Calu3 (cell line): ENCODE measurements at regions of chr2 and their contacts with region 1.

Region 1: DNA sequence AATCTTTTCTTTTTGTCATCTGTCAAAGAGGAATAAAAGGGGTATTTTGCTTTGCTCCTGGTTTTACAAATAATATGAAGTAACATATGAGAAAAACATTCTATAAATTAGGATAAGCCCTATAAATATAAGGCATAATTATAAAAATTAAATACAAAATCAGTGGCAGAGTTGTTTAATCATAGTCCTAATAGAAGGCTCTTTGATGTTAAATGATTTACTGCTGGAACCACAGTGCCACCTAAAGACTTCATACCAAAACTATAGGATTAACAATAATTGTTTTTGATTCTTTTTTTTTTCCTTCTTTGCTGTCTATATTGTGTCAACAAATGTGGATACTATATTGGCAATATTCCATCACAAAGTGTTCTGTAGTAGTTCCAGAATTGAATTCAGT is 837.7 kb upstream of the SLC39A10 start:
- DNase-seq: peak; percentile 4
- H3K4me3 Mint-ChIP-seq: no peak overlapping the region
- H3K27ac Mint-ChIP-seq: no peak overlapping the region
- H3K4me1 Mint-ChIP-seq: no peaks in the 10 kb centered on the region
- H3K27me3 Mint-ChIP-seq: no peaks in the 10 kb centered on the region
- CTCF ChIP-seq: no peak

Region 2: DNA sequence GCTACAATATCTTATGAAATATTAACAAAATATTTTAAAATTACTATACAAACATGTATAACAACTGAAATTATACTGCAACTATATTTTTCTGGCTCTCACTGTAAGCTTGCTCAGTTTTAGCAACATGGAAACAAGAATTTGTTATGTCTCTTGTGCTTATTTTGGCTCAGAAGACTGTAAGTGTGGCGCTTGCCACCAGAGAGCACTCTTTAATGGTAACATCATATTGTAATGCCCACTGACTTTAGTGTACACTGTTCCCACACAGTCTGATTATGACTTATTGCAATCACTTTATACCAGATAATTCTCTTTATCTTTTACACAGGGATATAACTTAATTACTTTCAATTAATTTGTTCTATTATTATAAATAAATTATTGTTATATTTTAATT is 1124.0 kb before region 1 on chr2:
- CTCF ChIA-PET with region 1: no interaction called
- intact Hi-C with region 1: loop called (anchors 5 kb)
- DNase-seq: peak; percentile 19
- H3K4me3 Mint-ChIP-seq: no peak overlapping the region
- H3K27ac Mint-ChIP-seq: no peak overlapping the region
- H3K4me1 Mint-ChIP-seq: no peaks in the 10 kb centered on the region
- H3K27me3 Mint-ChIP-seq: no peaks in the 10 kb centered on the region
- CTCF ChIP-seq: peak; percentile 29

Region 3: DNA sequence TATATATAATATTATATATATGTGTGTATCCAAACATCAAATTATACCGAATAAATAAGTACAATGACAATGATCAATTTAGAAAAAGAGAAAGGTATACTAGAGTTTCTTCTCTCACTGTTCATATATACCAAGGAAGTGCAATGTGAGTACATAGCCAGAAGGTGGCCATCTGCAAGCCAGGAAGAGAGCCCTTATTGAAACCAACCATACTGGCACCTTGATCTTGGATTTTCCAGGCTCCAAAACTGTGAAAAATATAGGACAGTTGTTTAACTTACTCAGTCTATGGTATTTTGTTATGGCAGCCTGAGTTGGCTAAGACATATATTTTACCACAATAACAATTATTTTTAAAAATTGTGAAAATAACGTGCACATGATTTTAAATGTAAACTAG is 652.5 kb before region 1 on chr2:
- CTCF ChIA-PET with region 1: no interaction called
- intact Hi-C with region 1: loop called (anchors 2 kb)
- DNase-seq: peak; percentile 23
- H3K4me3 Mint-ChIP-seq: no peak overlapping the region
- H3K27ac Mint-ChIP-seq: no peak overlapping the region
- H3K4me1 Mint-ChIP-seq: no peaks in the 10 kb centered on the region
- H3K27me3 Mint-ChIP-seq: no peaks in the 10 kb centered on the region
- CTCF ChIP-seq: peak; percentile 58

Region 4: DNA sequence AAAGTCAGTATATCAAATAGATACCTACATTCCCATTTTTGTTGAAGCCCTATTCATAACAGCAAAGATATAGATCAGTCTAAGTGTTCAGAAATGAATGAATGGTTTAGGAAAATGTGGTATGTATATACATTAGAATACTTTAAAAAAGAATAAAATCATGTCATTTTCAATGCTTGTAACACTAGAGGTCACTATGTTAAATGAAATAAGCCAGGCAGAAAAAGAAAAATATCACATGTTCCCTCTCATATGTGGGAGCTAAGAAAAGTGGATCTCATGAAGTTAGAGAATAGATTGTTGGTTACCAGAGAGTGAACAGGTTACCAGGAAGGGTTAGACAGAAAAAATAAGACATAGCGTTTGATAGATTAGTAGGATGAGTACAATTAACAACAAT is 273.4 kb before region 1 on chr2:
- CTCF ChIA-PET with region 1: no interaction called
- intact Hi-C with region 1: loop called (anchors 1 kb)
- DNase-seq: no peak
- H3K4me3 Mint-ChIP-seq: no peak overlapping the region
- H3K27ac Mint-ChIP-seq: no peak overlapping the region
- H3K4me1 Mint-ChIP-seq: peaks cover 21% of the 10 kb centered on the region
- H3K27me3 Mint-ChIP-seq: no peaks in the 10 kb centered on the region
- CTCF ChIP-seq: peak; percentile 32